Caco-2 (cell line): ENCODE measurements at regions of chr19 and their contacts with region 1.

Region 1: DNA sequence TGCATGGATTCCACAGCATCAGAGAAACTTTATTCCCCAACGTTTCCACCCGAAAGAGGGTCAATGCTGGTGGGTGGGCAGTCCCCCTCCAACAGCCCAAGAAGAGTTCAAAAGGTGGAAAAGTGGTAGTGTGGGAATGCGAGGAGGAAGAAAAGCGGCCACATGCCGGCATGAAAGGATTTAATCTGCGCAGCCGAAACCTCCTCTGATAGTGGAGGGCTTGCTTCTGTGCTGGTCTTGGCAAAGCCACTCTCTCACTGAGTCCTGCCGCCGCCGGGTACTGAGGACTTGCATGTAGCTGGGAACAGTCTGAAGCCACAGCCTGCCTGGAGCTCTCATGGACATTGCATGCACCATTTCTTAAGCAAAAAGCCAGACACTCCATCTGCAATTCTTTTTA is 136.2 kb upstream of the ZNF536 start:
- DNase-seq: no peak
- H3K4me3 ChIP-seq: no peak overlapping the region
- H3K4me3 Mint-ChIP-seq: no peak overlapping the region
- H3K27ac Mint-ChIP-seq: no peak overlapping the region
- H3K4me1 ChIP-seq: no peaks in the 10 kb centered on the region
- H3K4me1 Mint-ChIP-seq: no peaks in the 10 kb centered on the region
- H3K27me3 ChIP-seq: no peaks in the 10 kb centered on the region; the same call in 1 of the 2 replicates
- H3K27me3 Mint-ChIP-seq: peaks cover 17% of the 10 kb centered on the region
- CTCF ChIP-seq: no peak

Region 2: DNA sequence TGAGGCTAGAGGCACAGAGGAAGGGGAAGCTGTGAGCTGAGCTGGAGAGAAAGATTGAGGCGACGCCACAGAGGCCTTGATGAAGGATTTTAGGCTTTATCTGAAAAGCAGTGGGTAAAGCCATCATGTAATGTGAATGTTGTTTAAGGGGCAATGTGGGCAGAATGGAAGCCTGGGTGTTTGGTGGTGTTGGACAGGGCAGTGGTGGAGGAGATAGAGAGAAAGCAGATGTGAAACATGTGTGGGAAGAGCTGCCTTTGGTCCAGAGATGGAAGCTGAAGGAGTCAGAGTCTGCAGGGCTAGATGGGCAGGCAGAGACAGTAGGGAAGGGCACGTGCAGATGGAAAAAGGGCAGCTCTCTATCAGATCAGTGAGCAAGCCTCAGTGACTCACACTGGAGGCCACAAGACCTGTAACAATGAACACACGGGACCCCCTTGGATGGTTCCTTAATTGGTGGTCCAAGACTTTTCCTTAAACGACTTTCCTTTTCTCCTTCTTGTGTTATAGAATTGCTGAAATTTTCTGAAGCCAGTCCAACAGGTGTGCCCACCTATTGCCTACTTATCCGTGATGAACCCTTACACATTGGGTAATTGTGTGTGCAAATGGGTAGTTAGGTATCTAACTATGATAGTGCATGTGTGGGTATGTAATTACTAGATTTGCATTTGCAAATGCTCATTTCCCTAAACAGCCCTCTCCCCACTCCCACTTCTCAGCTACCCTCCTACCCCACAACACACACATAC is 157.9 kb after region 1 on chr19:
- CTCF ChIA-PET with region 1: no interaction called
- POLR2A ChIA-PET with region 1: interaction called, 10 read pairs
- intact Hi-C with region 1: no loop called
- DNase-seq: no peak
- H3K4me3 ChIP-seq: no peak overlapping the region
- H3K4me3 Mint-ChIP-seq: no peak overlapping the region
- H3K27ac Mint-ChIP-seq: no peak overlapping the region
- H3K4me1 ChIP-seq: no peaks in the 10 kb centered on the region
- H3K4me1 Mint-ChIP-seq: no peaks in the 10 kb centered on the region
- H3K27me3 ChIP-seq: no peaks in the 10 kb centered on the region
- H3K27me3 Mint-ChIP-seq: peaks cover 13% of the 10 kb centered on the region
- CTCF ChIP-seq: no peak